HepG2 (cell line): ENCODE measurements at regions of chr9 and their contacts with region 1.

Region 1: GRCh38 chr9:101354143-101354764 is 30.6 kb downstream of the BAAT start:
- DNase-seq: peak; percentile 100
- ATAC-seq: peak; percentile 92
- H3K4me3 ChIP-seq: peak overlapping the region in 1 of 3 experiments; percentile 17; a peak in 1 of 6 replicates
- H3K27ac ChIP-seq: peak overlapping the region; percentile 94
- H3K4me1 ChIP-seq: peaks cover 95% of the 10 kb centered on the region
- H3K27me3 ChIP-seq: no peaks in the 10 kb centered on the region
- CTCF ChIP-seq: no peak
- EP300 ChIP-seq: peak; percentile 81 to 97
- POLR2A ChIP-seq: no peak
- RAD21 ChIP-seq: no peak; the same call in 1 of the 2 replicates

Region 2: GRCh38 chr9:101326501-101326900 is 27.8 kb before region 1 on chr9:
- CTCF ChIA-PET with region 1: no interaction called
- POLR2A ChIA-PET with region 1: interaction called, 116 read pairs
- in situ Hi-C with region 1: no loop called
- intact Hi-C with region 1: loop called (anchors 1 kb)
- DNase-seq: peak; percentile 16
- ATAC-seq: no peak
- H3K4me3 ChIP-seq: no peak overlapping the region
- H3K27ac ChIP-seq: peak overlapping the region; percentile 97
- H3K4me1 ChIP-seq: peaks cover 74% of the 10 kb centered on the region
- H3K27me3 ChIP-seq: no peaks in the 10 kb centered on the region
- CTCF ChIP-seq: no peak
- EP300 ChIP-seq: peak in 1 of 2 experiments; percentile 66; a peak in 1 of 4 replicates
- POLR2A ChIP-seq: peak in 1 of 2 experiments; percentile 48; a peak in 1 of 4 replicates
- RAD21 ChIP-seq: no peak

Region 3: GRCh38 chr9:101333926-101334702 is 20.1 kb before region 1 on chr9:
- CTCF ChIA-PET with region 1: no interaction called
- POLR2A ChIA-PET with region 1: interaction called, 6 read pairs
- in situ Hi-C with region 1: no loop called
- intact Hi-C with region 1: loop called (anchors 2 kb)
- DNase-seq: no peak
- ATAC-seq: peak; percentile 49
- H3K4me3 ChIP-seq: no peak overlapping the region
- H3K27ac ChIP-seq: no peak overlapping the region
- H3K4me1 ChIP-seq: peaks cover 23% of the 10 kb centered on the region
- H3K27me3 ChIP-seq: no peaks in the 10 kb centered on the region
- CTCF ChIP-seq: no peak
- EP300 ChIP-seq: no peak
- POLR2A ChIP-seq: no peak
- RAD21 ChIP-seq: no peak

Region 4: DNA sequence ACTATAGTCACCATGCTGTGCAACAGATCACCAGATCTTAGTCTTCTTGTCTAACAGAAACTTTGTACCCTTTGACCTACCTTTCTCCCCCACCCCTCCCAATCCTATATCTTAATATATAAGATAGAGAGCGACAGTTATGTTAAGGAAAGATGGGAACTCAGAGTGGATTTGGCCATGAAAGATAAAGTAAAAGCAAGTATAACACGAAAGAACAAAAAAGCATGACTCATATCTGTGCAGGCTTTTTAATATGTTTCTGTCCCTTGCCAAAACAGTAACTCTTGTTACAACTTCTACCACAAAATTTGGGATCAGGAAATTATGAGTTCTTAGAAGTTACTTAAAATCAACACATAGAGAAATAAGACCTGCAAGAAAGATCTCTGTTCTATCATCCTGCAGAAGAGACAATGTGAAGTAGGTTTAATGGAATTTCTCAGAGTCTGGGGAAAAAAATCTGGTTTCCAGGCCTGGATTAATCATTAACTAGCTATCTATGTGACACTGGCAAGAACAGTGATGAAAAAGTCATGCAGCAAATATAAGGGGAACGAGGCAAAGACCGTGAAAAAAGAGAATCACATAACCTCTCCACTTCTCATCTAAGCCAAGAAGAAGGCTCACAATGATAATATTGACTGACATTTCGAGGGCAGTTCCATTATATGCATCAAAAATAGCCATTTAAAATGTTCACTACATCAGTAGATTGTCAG is 11.9 kb after region 1 on chr9:
- CTCF ChIA-PET with region 1: no interaction called
- POLR2A ChIA-PET with region 1: interaction called, 33 read pairs
- in situ Hi-C with region 1: no loop called
- intact Hi-C with region 1: loop called (anchors 1 kb)
- DNase-seq: peak; percentile 91
- ATAC-seq: peak; percentile 92
- H3K4me3 ChIP-seq: peak overlapping the region in 2 of 3 experiments; percentile 42 to 46; a peak in 3 of 6 replicates
- H3K27ac ChIP-seq: peak overlapping the region; percentile 74
- H3K4me1 ChIP-seq: peaks cover 45% of the 10 kb centered on the region
- H3K27me3 ChIP-seq: no peaks in the 10 kb centered on the region
- CTCF ChIP-seq: no peak
- EP300 ChIP-seq: peak in 1 of 2 experiments; percentile 44; a peak in 1 of 4 replicates
- POLR2A ChIP-seq: peak in 1 of 2 experiments; percentile 41; a peak in 1 of 4 replicates
- RAD21 ChIP-seq: no peak